Naive thymus-derived CD4-positive, alpha-beta T cell (primary cell): ENCODE measurements at regions of chr6 and their contacts with region 1.

Region 1: GRCh38 chr6:159104163-159104925 is 59.6 kb upstream of the TAGAP start:
- DNase-seq: peak; percentile 68 to 81 (median 77)
- ATAC-seq: peak; percentile 79
- H3K4me3 ChIP-seq: peak overlapping the region; percentile 5
- H3K4me3 Mint-ChIP-seq: peak overlapping the region in 9 of 10 donors; percentile 40 to 69 (median 54)
- H3K27ac ChIP-seq: peak overlapping the region; percentile 79
- H3K27ac Mint-ChIP-seq: peak overlapping the region; percentile 82 to 98 (median 91)
- H3K4me1 ChIP-seq: peaks cover 58 to 73% of the 10 kb centered on the region in 2 donors
- H3K4me1 Mint-ChIP-seq: peaks cover 58 to 96% (median 86%) of the 10 kb centered on the region in 7 donors
- H3K27me3 ChIP-seq: no peaks in the 10 kb centered on the region
- H3K27me3 Mint-ChIP-seq: no peaks in the 10 kb centered on the region

Region 2: GRCh38 chr6:158095671-158096070 is 1008.7 kb before region 1 on chr6:
- CTCF ChIA-PET with region 1: no interaction called
- POLR2A ChIA-PET with region 1: no interaction called
- intact Hi-C with region 1: no loop called
- DNase-seq: no peak
- ATAC-seq: no peak
- H3K4me3 ChIP-seq: no peak overlapping the region
- H3K4me3 Mint-ChIP-seq: no peak overlapping the region
- H3K27ac ChIP-seq: no peak overlapping the region
- H3K27ac Mint-ChIP-seq: no peak overlapping the region
- H3K4me1 ChIP-seq: no peaks in the 10 kb centered on the region
- H3K4me1 Mint-ChIP-seq: no peaks in the 10 kb centered on the region
- H3K27me3 ChIP-seq: no peaks in the 10 kb centered on the region
- H3K27me3 Mint-ChIP-seq: no peaks in the 10 kb centered on the region

Region 3: DNA sequence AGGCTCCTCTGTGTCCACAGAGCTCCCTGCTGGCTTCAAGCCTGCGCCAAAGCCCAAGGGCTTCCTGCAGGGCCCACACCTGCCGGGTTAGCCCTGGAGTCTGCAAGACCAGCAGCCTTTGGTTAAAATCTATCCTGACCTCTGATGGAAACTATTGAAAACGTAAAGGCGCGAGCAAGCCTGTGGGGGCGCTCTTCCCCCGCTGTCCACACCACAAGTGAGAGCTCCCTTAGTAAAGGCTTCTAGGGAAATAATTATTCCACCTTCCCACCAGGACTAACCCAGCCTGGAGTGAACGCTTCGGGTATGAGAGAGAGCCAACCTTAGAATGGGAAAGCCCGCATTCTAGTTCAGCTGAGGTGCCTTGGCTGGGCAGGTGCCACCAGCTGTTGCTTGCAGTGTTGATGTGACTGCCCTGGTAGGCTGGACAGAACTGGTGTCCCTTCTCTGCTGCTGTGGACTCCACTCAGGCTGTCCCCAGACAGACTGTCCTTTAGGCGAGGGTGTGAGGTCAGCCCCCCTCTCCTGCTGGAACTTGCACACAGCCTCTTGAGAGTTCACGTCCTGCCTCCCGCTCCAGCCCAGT is 385.8 kb before region 1 on chr6:
- CTCF ChIA-PET with region 1: no interaction called
- POLR2A ChIA-PET with region 1: no interaction called
- intact Hi-C with region 1: loop called in 1 of 2 experiments (anchors 5 kb)
- DNase-seq: no peak
- ATAC-seq: no peak
- H3K4me3 ChIP-seq: no peak overlapping the region
- H3K4me3 Mint-ChIP-seq: peak overlapping the region in 2 of 10 donors; percentile 3 to 56
- H3K27ac ChIP-seq: no peak overlapping the region
- H3K27ac Mint-ChIP-seq: peak overlapping the region in 4 of 9 donors; percentile 73 to 90 (median 80)
- H3K4me1 ChIP-seq: peaks cover 10 to 58% of the 10 kb centered on the region in 2 donors
- H3K4me1 Mint-ChIP-seq: peaks cover 28 to 71% (median 36%) of the 10 kb centered on the region in 7 donors
- H3K27me3 ChIP-seq: no peaks in the 10 kb centered on the region
- H3K27me3 Mint-ChIP-seq: no peaks in the 10 kb centered on the region

Region 4: DNA sequence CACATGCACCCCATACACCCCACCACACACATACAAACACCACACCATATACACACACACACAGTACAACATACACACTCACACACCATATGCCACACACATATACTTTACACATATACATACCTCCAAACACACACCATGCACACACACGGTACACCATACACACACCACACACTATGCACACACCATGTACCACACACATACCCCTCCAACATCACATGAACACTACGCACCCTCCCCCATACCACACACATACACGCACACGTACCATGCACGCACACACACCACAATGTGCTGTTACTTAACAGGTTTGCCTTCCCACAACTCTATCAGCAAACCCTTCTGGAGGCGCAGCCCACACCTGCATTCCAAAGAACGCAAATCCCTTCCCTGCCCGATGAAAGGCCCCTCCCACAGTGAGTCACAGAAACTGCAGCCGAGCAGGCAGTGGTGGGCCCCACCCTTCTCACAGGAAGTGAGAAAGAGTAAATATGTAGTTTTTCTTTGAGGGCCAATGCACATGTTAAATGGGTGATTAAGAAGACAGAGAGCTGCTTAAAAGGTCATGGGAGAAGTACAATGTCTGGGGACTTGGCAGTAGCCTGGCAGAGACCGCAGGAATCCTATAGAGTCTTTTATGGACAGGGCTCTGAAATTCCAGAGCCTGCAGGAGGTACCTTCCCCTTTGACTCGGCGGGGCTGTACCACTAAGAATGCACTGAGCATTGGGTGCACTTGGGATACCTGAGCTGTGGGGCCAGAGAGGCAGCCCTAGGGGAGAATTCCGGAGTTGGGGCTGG is 251.1 kb before region 1 on chr6:
- CTCF ChIA-PET with region 1: no interaction called
- POLR2A ChIA-PET with region 1: interaction called, 7 read pairs
- intact Hi-C with region 1: loop called in 1 of 2 experiments (anchors 1 kb)
- DNase-seq: peak; percentile 54 to 93 (median 86)
- ATAC-seq: peak; percentile 79
- H3K4me3 ChIP-seq: peak overlapping the region; percentile 55
- H3K4me3 Mint-ChIP-seq: no peak overlapping the region
- H3K27ac ChIP-seq: peak overlapping the region; percentile 83
- H3K27ac Mint-ChIP-seq: no peak overlapping the region
- H3K4me1 ChIP-seq: peaks cover 47 to 55% of the 10 kb centered on the region in 2 donors
- H3K4me1 Mint-ChIP-seq: peaks cover 16 to 42% (median 33%) of the 10 kb centered on the region in 7 donors
- H3K27me3 ChIP-seq: no peaks in the 10 kb centered on the region
- H3K27me3 Mint-ChIP-seq: no peaks in the 10 kb centered on the region

Region 5: GRCh38 chr6:159008656-159009288 is 95.6 kb before region 1 on chr6:
- CTCF ChIA-PET with region 1: interaction called, 220 read pairs
- POLR2A ChIA-PET with region 1: interaction called, 29 read pairs
- intact Hi-C with region 1: loop called (anchors 1 kb)
- DNase-seq: peak in 8 of 9 donors; percentile 7 to 64 (median 56)
- ATAC-seq: peak; percentile 79
- H3K4me3 ChIP-seq: no peak overlapping the region
- H3K4me3 Mint-ChIP-seq: peak overlapping the region in 1 of 10 donors; percentile 16
- H3K27ac ChIP-seq: no peak overlapping the region
- H3K27ac Mint-ChIP-seq: peak overlapping the region in 1 of 9 donors; percentile 60
- H3K4me1 ChIP-seq: peaks cover 14 to 22% of the 10 kb centered on the region in 2 donors
- H3K4me1 Mint-ChIP-seq: peaks cover 17 to 44% (median 27%) of the 10 kb centered on the region in 7 donors
- H3K27me3 ChIP-seq: no peaks in the 10 kb centered on the region
- H3K27me3 Mint-ChIP-seq: no peaks in the 10 kb centered on the region

Region 6: DNA sequence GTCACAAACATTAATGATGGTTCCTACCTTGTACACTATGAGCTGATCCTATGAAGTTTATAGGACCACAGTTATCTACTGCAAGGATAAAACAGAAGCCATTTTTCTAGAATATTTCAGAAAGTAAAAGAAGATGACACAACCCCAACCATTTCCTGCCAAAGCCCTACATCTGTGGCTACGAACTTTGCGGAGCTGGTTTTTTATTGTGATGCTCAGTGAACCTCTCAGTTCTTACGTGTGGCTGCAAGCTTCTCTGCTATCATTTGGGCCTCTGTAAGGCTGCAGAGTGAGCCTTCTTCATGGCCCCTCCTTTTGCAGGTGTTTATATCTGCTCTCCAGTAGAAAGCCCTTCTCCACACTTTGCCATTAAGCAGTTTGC is 41.8 kb before region 1 on chr6:
- CTCF ChIA-PET with region 1: interaction called, 17 read pairs
- POLR2A ChIA-PET with region 1: interaction called, 53 read pairs
- intact Hi-C with region 1: loop called (anchors 1 kb)
- DNase-seq: peak in 7 of 9 donors; percentile 75 to 89 (median 85)
- ATAC-seq: peak; percentile 92
- H3K4me3 ChIP-seq: peak overlapping the region; percentile 14
- H3K4me3 Mint-ChIP-seq: peak overlapping the region; percentile 66 to 84 (median 74)
- H3K27ac ChIP-seq: peak overlapping the region; percentile 79
- H3K27ac Mint-ChIP-seq: peak overlapping the region; percentile 96 to 99 (median 98)
- H3K4me1 ChIP-seq: peaks cover 52 to 54% of the 10 kb centered on the region in 2 donors
- H3K4me1 Mint-ChIP-seq: peaks cover 60 to 88% (median 86%) of the 10 kb centered on the region in 7 donors
- H3K27me3 ChIP-seq: no peaks in the 10 kb centered on the region
- H3K27me3 Mint-ChIP-seq: no peaks in the 10 kb centered on the region